Natural killer cell (primary cell): ENCODE measurements at regions of chr6 and their contacts with region 1.

Region 1: DNA sequence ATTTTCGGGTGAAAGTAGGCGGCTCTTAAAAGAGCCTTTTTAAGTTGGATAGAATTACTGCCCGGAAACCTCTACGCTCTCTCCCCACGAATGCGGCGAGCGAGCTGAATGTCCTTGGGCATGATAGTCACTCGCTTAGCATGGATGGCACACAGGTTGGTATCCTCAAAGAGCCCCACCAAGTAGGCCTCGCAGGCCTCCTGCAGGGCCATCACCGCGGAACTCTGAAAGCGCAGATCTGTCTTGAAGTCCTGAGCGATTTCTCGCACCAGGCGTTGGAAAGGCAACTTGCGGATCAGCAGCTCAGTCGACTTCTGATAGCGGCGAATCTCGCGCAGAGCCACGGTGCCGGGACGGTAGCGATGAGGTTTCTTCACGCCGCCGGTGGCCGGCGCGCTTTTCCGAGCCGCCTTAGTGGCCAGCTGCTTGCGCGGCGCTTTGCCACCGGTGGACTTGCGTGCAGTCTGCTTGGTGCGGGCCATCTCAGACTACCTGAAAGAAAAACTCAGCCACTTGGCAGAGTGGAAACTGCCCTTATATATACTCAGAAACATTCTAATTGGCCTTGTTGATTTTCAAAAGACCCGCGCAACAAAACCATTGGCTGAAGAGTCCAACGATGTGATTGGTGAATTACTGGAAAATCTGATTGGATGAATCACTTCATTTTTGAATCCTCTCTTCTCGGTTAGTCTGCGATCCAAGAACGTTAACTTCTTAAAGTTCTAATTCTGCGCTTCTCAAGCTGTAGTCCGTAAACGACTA is 93.9 kb upstream of the BTN3A2 start:
- DNase-seq: peak; percentile 78 to 92
- ATAC-seq: peak in 2 of 3 donors; percentile 17 to 20
- H3K4me3 ChIP-seq: peak overlapping the region; percentile 62
- H3K4me3 Mint-ChIP-seq: no peak overlapping the region
- H3K27ac ChIP-seq: peak overlapping the region; percentile 92
- H3K27ac Mint-ChIP-seq: no peak overlapping the region
- H3K4me1 ChIP-seq: peaks cover 30% of the 10 kb centered on the region
- H3K4me1 Mint-ChIP-seq: peaks cover 14 to 21% of the 10 kb centered on the region in 2 donors
- H3K27me3 ChIP-seq: no peaks in the 10 kb centered on the region
- H3K27me3 Mint-ChIP-seq: no peaks in the 10 kb centered on the region
- CTCF ChIP-seq: no peak

Region 2: GRCh38 chr6:26003102-26003694 is 267.9 kb before region 1 on chr6:
- intact Hi-C with region 1: no loop called
- DNase-seq: peak; percentile 44 to 74
- ATAC-seq: peak in 2 of 3 donors; percentile 74
- H3K4me3 ChIP-seq: no peak overlapping the region
- H3K4me3 Mint-ChIP-seq: no peak overlapping the region
- H3K27ac ChIP-seq: no peak overlapping the region
- H3K27ac Mint-ChIP-seq: no peak overlapping the region
- H3K4me1 ChIP-seq: no peaks in the 10 kb centered on the region
- H3K4me1 Mint-ChIP-seq: no peaks in the 10 kb centered on the region
- H3K27me3 ChIP-seq: no peaks in the 10 kb centered on the region
- H3K27me3 Mint-ChIP-seq: no peaks in the 10 kb centered on the region
- CTCF ChIP-seq: peak; percentile 82

Region 3: GRCh38 chr6:26045065-26045927 is 225.8 kb before region 1 on chr6:
- intact Hi-C with region 1: loop called (anchors 5 kb)
- DNase-seq: peak; percentile 64 to 92
- ATAC-seq: peak; percentile 52 to 73 (median 64)
- H3K4me3 ChIP-seq: peak overlapping the region; percentile 64
- H3K4me3 Mint-ChIP-seq: peak overlapping the region; percentile 95
- H3K27ac ChIP-seq: peak overlapping the region; percentile 91
- H3K27ac Mint-ChIP-seq: peak overlapping the region; percentile 97 to 98
- H3K4me1 ChIP-seq: peaks cover 26% of the 10 kb centered on the region
- H3K4me1 Mint-ChIP-seq: peaks cover 25 to 28% of the 10 kb centered on the region in 2 donors
- H3K27me3 ChIP-seq: no peaks in the 10 kb centered on the region
- H3K27me3 Mint-ChIP-seq: no peaks in the 10 kb centered on the region
- CTCF ChIP-seq: no peak

Region 4: GRCh38 chr6:26216356-26216885 is 54.7 kb before region 1 on chr6:
- intact Hi-C with region 1: loop called (anchors 2 kb)
- DNase-seq: peak; percentile 68 to 94
- ATAC-seq: peak; percentile 77 to 92 (median 79)
- H3K4me3 ChIP-seq: peak overlapping the region; percentile 63
- H3K4me3 Mint-ChIP-seq: no peak overlapping the region
- H3K27ac ChIP-seq: peak overlapping the region; percentile 91
- H3K27ac Mint-ChIP-seq: no peak overlapping the region
- H3K4me1 ChIP-seq: peaks cover 27% of the 10 kb centered on the region
- H3K4me1 Mint-ChIP-seq: no peaks in the 10 kb centered on the region
- H3K27me3 ChIP-seq: no peaks in the 10 kb centered on the region
- H3K27me3 Mint-ChIP-seq: no peaks in the 10 kb centered on the region
- CTCF ChIP-seq: no peak

Region 5: DNA sequence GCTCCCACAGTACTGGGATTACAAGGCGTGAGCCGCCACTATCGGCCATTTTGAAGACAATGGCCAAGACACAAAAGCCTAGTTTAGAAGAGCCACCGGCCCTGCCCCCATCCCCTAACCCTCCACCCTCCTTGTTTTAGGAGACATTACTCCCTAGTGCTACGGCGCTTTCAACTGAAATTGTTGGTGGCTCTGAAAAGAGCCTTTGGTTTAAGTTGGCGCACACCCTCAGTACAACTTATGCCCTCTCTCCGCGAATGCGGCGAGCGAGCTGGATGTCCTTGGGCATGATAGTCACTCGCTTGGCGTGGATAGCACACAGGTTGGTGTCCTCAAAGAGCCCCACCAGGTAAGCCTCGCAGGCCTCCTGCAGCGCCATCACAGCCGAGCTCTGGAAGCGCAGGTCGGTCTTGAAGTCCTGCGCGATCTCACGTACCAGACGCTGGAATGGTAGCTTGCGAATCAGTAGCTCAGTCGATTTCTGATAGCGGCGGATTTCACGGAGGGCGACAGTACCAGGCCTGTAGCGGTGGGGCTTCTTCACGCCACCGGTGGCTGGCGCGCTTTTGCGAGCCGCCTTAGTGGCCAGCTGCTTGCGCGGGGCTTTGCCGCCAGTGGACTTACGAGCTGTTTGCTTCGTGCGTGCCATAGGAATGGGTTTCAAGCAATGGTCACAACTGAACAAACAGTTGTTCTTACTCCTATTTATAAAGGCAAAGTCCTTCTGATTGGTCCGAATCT is 21.0 kb before region 1 on chr6:
- intact Hi-C with region 1: loop called (anchors 1 kb)
- DNase-seq: peak; percentile 62 to 89
- ATAC-seq: peak; percentile 64 to 79 (median 68)
- H3K4me3 ChIP-seq: peak overlapping the region; percentile 74
- H3K4me3 Mint-ChIP-seq: peak overlapping the region; percentile 98
- H3K27ac ChIP-seq: peak overlapping the region; percentile 70
- H3K27ac Mint-ChIP-seq: peak overlapping the region; percentile 96 to 97
- H3K4me1 ChIP-seq: peaks cover 16% of the 10 kb centered on the region
- H3K4me1 Mint-ChIP-seq: peaks cover 39 to 40% of the 10 kb centered on the region in 2 donors
- H3K27me3 ChIP-seq: no peaks in the 10 kb centered on the region
- H3K27me3 Mint-ChIP-seq: no peaks in the 10 kb centered on the region
- CTCF ChIP-seq: peak; percentile 44

Region 6: GRCh38 chr6:26295691-26296555 is 24.8 kb after region 1 on chr6:
- intact Hi-C with region 1: no loop called
- DNase-seq: no peak
- ATAC-seq: no peak
- H3K4me3 ChIP-seq: no peak overlapping the region
- H3K4me3 Mint-ChIP-seq: no peak overlapping the region
- H3K27ac ChIP-seq: no peak overlapping the region
- H3K27ac Mint-ChIP-seq: peak overlapping the region in 1 of 2 donors; percentile 13
- H3K4me1 ChIP-seq: no peaks in the 10 kb centered on the region
- H3K4me1 Mint-ChIP-seq: peaks cover 5 to 6% of the 10 kb centered on the region in 2 donors
- H3K27me3 ChIP-seq: peaks cover 3% of the 10 kb centered on the region
- H3K27me3 Mint-ChIP-seq: peaks cover 0 to 14% of the 10 kb centered on the region in 2 donors
- CTCF ChIP-seq: no peak

Region 7: GRCh38 chr6:26312501-26313390 is 41.7 kb after region 1 on chr6:
- intact Hi-C with region 1: loop called (anchors 2 kb)
- DNase-seq: peak; percentile 79 to 93
- ATAC-seq: peak; percentile 52 to 75 (median 68)
- H3K4me3 ChIP-seq: peak overlapping the region; percentile 59
- H3K4me3 Mint-ChIP-seq: peak overlapping the region; percentile 98
- H3K27ac ChIP-seq: peak overlapping the region; percentile 36
- H3K27ac Mint-ChIP-seq: peak overlapping the region; percentile 98 to 99
- H3K4me1 ChIP-seq: peaks cover 20% of the 10 kb centered on the region
- H3K4me1 Mint-ChIP-seq: peaks cover 58% of the 10 kb centered on the region in 2 donors
- H3K27me3 ChIP-seq: no peaks in the 10 kb centered on the region
- H3K27me3 Mint-ChIP-seq: peaks cover 6 to 13% of the 10 kb centered on the region in 2 donors
- CTCF ChIP-seq: no peak

Region 8: GRCh38 chr6:26514984-26515383 is 243.9 kb after region 1 on chr6:
- intact Hi-C with region 1: no loop called
- DNase-seq: no peak
- ATAC-seq: no peak
- H3K4me3 ChIP-seq: no peak overlapping the region
- H3K4me3 Mint-ChIP-seq: no peak overlapping the region
- H3K27ac ChIP-seq: no peak overlapping the region
- H3K27ac Mint-ChIP-seq: no peak overlapping the region
- H3K4me1 ChIP-seq: peaks cover under 1% of the 10 kb centered on the region
- H3K4me1 Mint-ChIP-seq: peaks cover 0 to under 1% of the 10 kb centered on the region in 2 donors
- H3K27me3 ChIP-seq: no peaks in the 10 kb centered on the region
- H3K27me3 Mint-ChIP-seq: no peaks in the 10 kb centered on the region
- CTCF ChIP-seq: no peak